ENCODE measurements at regions of chr14 and their contacts with region 1.

Region 1: GRCh38 chr14:98548071-98548686 is 723.8 kb downstream of the BCL11B start:
- DNase-seq: peak; percentile 69
- H3K4me3 Mint-ChIP-seq: peak overlapping the region; percentile 22
- H3K27ac Mint-ChIP-seq: peak overlapping the region; percentile 91
- H3K4me1 Mint-ChIP-seq: peaks cover 22% of the 10 kb centered on the region
- H3K27me3 Mint-ChIP-seq: no peaks in the 10 kb centered on the region

Region 2: DNA sequence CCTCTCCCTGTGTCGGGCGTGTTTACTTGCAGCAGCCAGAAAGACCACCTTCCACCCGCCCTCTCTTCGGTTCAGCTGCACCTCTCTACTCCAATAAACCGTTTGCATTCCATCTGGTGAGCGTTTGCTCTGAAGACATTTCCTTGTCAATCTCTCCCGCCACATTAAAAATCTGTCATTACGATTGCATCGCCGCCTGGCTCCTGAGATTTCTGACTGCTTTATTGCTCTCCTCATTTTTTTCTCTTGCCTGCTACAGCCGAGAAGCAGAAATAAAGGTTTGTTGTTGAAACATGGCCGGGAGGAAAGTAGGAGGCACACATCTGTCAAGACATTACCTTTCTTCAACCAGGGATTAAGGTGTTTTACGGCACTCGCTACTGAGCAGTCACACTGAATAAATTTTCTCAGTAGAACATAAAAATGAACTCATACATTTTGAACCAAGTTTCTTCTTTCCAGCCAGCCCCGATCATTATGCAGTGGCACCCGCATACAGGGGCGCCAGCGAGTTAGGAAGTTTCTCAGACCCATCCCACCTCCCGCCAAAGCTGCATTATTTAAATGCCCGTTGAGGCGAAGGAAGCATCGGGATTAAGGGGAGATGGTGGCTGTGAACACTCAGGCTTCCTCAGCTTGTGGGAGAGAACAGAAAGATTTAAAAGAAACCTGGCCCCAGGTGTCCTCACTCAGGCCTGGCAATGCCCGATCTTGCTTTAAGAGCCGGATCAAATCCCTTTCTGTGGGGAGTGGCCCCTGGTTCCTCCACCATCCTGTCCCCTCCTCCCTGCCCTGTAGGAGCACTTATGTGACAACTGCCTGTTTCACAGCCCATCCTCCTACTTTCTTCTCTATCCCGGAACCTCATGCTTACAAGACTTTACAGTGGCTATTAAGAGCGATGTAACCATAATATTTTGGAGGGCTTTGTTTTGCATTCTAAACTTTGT is 385.0 kb before region 1 on chr14:
- CTCF ChIA-PET with region 1: no interaction called
- intact Hi-C with region 1: no loop called
- DNase-seq: no peak
- H3K4me3 Mint-ChIP-seq: peak overlapping the region; percentile 40
- H3K27ac Mint-ChIP-seq: peak overlapping the region; percentile 83
- H3K4me1 Mint-ChIP-seq: peaks cover 75% of the 10 kb centered on the region
- H3K27me3 Mint-ChIP-seq: no peaks in the 10 kb centered on the region

Region 3: GRCh38 chr14:98512501-98513251 is 35.5 kb before region 1 on chr14:
- CTCF ChIA-PET with region 1: no interaction called
- intact Hi-C with region 1: loop called (anchors 2 kb)
- DNase-seq: no peak
- H3K4me3 Mint-ChIP-seq: peak overlapping the region; percentile 30
- H3K27ac Mint-ChIP-seq: peak overlapping the region; percentile 73
- H3K4me1 Mint-ChIP-seq: peaks cover 40% of the 10 kb centered on the region
- H3K27me3 Mint-ChIP-seq: no peaks in the 10 kb centered on the region

Region 4: DNA sequence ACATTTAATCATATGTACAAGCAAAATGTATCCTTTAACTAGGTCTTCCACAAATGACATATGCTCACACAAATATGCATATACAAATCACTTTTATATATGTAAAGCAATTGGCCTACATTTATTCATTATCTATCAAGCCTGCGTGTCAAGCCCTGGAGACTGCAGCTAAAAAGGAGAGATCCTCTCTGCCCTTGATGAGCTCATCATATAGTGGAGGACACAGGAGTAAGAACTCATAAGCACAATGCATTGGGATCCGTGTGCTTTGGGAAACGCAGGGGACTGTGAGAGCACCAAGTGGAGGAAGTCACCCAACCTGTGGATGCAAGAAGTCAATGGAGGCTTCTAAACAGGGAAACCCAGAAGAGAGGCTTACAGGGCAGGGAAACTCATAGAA is 11.9 kb before region 1 on chr14:
- CTCF ChIA-PET with region 1: no interaction called
- intact Hi-C with region 1: no loop called
- DNase-seq: no peak
- H3K4me3 Mint-ChIP-seq: no peak overlapping the region
- H3K27ac Mint-ChIP-seq: no peak overlapping the region
- H3K4me1 Mint-ChIP-seq: peaks cover 15% of the 10 kb centered on the region
- H3K27me3 Mint-ChIP-seq: no peaks in the 10 kb centered on the region